Mammary epithelial cell (primary cell): ENCODE measurements at regions of chr5 and their contacts with region 1.

Region 1: DNA sequence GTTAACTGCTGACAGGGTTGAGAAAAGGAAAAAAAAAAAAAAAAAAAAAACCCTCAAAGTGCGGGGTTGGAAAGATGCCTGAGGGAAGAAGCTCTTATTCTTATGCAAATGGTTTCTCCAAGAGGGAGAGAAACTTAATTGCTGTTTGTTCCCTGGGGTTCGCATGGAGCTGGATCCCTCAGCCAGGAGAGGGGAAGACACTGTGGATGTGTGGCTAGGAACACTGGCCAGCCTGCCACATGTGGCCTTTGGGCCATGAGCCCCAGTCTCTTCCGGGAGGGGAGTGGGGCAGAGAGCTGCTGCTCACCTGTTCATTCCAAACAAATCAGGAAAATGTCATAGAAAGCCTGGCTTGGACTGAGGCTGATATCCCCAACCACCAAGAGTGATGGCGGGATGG is 9.4 kb upstream of the SCGB3A2 start:
- DNase-seq: no peak
- H3K4me3 ChIP-seq: no peak overlapping the region
- H3K27ac ChIP-seq: no peak overlapping the region
- H3K4me1 ChIP-seq: no peaks in the 10 kb centered on the region
- H3K27me3 ChIP-seq: no peaks in the 10 kb centered on the region
- CTCF ChIP-seq: no peak

Region 2: GRCh38 chr5:147818290-147818689 is 50.8 kb before region 1 on chr5:
- CTCF ChIA-PET with region 1: no interaction called
- dilution Hi-C with region 1: no loop called
- in situ Hi-C with region 1: no loop called
- intact Hi-C with region 1: no loop called
- DNase-seq: no peak
- H3K4me3 ChIP-seq: no peak overlapping the region
- H3K27ac ChIP-seq: no peak overlapping the region
- H3K4me1 ChIP-seq: no peaks in the 10 kb centered on the region
- H3K27me3 ChIP-seq: no peaks in the 10 kb centered on the region
- CTCF ChIP-seq: no peak

Region 3: DNA sequence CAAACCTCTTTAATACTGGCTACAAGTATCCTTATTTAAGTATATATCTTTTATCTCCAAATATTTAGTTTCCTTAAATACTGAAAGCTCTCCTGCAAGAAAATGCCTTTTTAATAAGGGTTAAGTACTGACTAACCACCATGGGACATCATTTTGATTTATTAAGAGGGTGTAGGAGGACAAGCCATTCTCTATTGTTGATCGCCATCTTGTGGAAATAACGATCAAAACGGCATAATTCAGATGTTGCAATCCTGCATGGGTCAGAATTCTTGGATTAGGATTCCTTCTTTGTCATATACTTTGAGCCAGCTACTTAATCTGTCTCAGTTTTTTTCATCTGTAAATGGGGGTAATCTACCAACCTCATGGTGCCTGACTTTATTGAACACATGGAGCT is 65.9 kb after region 1 on chr5:
- CTCF ChIA-PET with region 1: interaction called, 12 read pairs
- dilution Hi-C with region 1: no loop called
- in situ Hi-C with region 1: no loop called
- intact Hi-C with region 1: no loop called
- DNase-seq: peak; percentile 69
- H3K4me3 ChIP-seq: no peak overlapping the region
- H3K27ac ChIP-seq: no peak overlapping the region
- H3K4me1 ChIP-seq: peaks cover 4% of the 10 kb centered on the region
- H3K27me3 ChIP-seq: no peaks in the 10 kb centered on the region
- CTCF ChIP-seq: peak; percentile 64